Natural killer cell (primary cell): ENCODE measurements at regions of chr10 and their contacts with region 1.

Region 1: DNA sequence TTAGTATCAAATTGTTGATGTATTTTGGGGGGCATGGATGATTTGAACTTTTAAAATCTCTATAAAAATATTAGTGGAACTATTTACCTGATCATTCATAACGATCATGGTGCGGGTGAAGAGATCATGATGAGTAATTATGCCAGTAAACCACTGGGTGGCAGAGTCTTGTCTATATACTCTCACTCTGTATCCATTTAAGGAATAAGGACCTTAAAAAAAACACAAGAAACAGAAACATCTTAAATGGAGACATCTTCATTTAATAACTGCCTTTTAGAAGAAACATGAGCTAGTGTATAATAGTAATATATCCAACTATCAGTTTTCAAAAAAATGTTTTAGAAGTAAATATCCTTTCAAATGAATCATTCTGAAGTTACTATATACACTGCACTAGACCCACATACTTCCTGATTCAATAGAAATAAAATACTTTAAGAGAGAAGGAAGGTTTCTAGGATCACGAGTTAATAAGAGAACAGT is 84.0 kb downstream of the NRBF2 start:
- DNase-seq: peak in 1 of 2 donors; percentile 77
- ATAC-seq: peak; percentile 86 to 88 (median 87)
- H3K4me3 ChIP-seq: no peak overlapping the region
- H3K4me3 Mint-ChIP-seq: no peak overlapping the region
- H3K27ac ChIP-seq: no peak overlapping the region
- H3K27ac Mint-ChIP-seq: peak overlapping the region; percentile 63 to 73
- H3K4me1 ChIP-seq: peaks cover 5% of the 10 kb centered on the region
- H3K4me1 Mint-ChIP-seq: peaks cover 37 to 44% of the 10 kb centered on the region in 2 donors
- H3K27me3 ChIP-seq: no peaks in the 10 kb centered on the region
- H3K27me3 Mint-ChIP-seq: no peaks in the 10 kb centered on the region
- CTCF ChIP-seq: peak; percentile 77

Region 2: DNA sequence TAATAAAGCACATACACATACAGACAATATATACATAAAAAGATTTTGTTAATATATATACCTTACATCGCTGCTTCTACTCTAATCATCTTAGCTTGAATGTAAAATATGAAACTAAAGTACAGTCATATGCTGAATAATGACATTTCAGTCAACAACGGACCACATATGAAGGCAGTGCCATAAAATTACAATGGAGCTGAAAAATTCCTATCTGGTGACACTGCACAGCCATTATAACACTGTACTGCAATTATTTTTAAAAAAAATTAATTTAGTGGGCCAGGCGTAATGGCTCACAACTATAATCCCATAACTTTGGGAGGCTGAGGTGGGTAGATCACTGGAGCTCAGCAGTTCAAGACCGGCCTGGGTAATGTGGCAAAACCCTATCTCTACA is 126.3 kb after region 1 on chr10:
- intact Hi-C with region 1: no loop called
- DNase-seq: no peak
- ATAC-seq: no peak
- H3K4me3 ChIP-seq: no peak overlapping the region
- H3K4me3 Mint-ChIP-seq: no peak overlapping the region
- H3K27ac ChIP-seq: no peak overlapping the region
- H3K27ac Mint-ChIP-seq: no peak overlapping the region
- H3K4me1 ChIP-seq: no peaks in the 10 kb centered on the region
- H3K4me1 Mint-ChIP-seq: peaks cover 6 to 11% of the 10 kb centered on the region in 2 donors
- H3K27me3 ChIP-seq: no peaks in the 10 kb centered on the region
- H3K27me3 Mint-ChIP-seq: no peaks in the 10 kb centered on the region
- CTCF ChIP-seq: no peak

Region 3: DNA sequence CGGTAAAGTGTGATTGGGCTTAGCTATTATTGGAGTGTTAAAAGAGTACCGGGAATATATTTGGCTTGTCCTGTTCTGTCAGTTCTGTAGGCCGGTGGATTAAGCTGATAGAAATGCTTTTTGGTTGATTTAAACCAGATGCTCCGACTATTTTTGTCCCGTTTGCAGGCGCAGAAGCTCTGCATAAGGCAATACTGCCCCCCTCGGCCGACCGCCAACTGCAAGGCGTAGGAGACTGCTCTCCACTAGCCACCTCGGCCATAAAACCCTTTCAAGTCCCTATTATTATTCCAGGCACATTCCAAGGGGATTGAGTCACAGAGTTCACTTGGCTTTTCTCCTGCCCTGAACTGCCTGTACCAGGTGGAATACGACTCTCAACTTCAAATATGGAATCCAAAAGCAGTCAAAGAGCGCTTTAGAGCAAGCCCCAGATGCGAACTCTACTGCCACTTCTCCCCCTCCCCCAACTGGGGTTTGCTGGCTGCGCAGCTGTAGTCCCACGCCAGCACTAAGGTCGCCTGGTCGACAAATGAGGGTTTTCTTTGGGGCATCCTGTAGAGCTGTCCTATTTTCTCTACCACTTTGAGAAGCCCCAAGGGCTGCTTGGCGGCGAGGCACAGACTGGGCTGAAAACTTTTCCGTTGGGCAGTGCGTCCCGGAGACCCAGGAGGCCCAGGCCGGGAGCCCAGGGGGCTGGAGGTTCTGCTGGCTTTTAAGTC is 412.4 kb after region 1 on chr10:
- intact Hi-C with region 1: loop called (anchors 1 kb)
- DNase-seq: peak; percentile 60 to 86
- ATAC-seq: peak; percentile 76 to 85 (median 83)
- H3K4me3 ChIP-seq: peak overlapping the region; percentile 77
- H3K4me3 Mint-ChIP-seq: peak overlapping the region; percentile 99
- H3K27ac ChIP-seq: peak overlapping the region; percentile 42
- H3K27ac Mint-ChIP-seq: peak overlapping the region; percentile 14 to 53
- H3K4me1 ChIP-seq: peaks cover 21% of the 10 kb centered on the region
- H3K4me1 Mint-ChIP-seq: peaks cover 22 to 27% of the 10 kb centered on the region in 2 donors
- H3K27me3 ChIP-seq: no peaks in the 10 kb centered on the region
- H3K27me3 Mint-ChIP-seq: peaks cover 5 to 8% of the 10 kb centered on the region in 2 donors
- CTCF ChIP-seq: peak; percentile 70

Region 4: GRCh38 chr10:63720072-63720537 is 502.9 kb after region 1 on chr10:
- intact Hi-C with region 1: loop called (anchors 1 kb)
- DNase-seq: peak in 1 of 2 donors; percentile 78
- ATAC-seq: peak; percentile 62 to 82 (median 76)
- H3K4me3 ChIP-seq: no peak overlapping the region
- H3K4me3 Mint-ChIP-seq: peak overlapping the region; percentile 25
- H3K27ac ChIP-seq: no peak overlapping the region
- H3K27ac Mint-ChIP-seq: no peak overlapping the region
- H3K4me1 ChIP-seq: peaks cover 4% of the 10 kb centered on the region
- H3K4me1 Mint-ChIP-seq: peaks cover 5 to 8% of the 10 kb centered on the region in 2 donors
- H3K27me3 ChIP-seq: no peaks in the 10 kb centered on the region
- H3K27me3 Mint-ChIP-seq: peaks cover 8 to 19% of the 10 kb centered on the region in 2 donors
- CTCF ChIP-seq: peak; percentile 99